ACHN (cell line): ENCODE measurements at regions of chr12 and their contacts with region 1.

Region 1: DNA sequence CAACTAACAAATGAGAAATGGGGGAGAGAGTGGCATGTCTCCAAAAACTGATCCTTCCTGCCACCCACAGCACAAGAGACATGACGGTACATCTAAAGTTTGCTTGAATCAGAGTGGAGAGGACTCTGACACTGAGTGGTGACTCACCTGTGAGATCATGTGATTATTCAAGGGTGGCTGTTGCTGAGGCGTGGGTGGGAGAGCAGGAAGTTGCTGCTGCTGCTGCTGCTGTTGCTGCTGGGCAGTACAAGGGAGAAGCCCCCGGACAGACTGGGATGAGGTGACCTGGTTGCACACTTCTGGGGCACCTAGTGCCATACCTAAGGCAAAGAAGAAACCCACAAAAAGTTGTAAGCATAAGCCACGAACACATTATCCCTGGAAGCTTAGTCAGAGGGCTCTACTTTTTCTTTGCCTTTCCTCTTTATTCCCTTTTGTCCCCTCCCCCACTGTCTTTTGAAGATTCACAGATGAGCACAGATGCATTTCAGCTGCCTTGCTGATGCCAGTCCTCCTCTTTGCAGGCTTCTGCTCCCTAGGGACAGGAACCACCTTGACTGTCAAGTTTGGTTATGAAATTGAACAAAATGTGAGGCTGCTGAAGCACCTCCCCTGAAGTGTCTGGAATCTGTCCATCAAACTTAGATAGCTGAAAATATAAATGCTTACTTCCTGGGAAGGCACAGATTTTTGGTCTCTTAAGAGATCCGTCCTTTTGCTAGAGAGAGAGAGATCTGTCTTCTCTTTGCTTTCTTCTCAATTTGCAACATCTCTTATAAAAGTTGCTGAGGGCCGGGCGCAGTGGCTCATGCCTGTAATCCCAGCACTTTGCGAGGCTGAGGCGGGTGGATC is 29.4 kb upstream of the STAC3 start:
- DNase-seq: peak; percentile 97

Region 2: DNA sequence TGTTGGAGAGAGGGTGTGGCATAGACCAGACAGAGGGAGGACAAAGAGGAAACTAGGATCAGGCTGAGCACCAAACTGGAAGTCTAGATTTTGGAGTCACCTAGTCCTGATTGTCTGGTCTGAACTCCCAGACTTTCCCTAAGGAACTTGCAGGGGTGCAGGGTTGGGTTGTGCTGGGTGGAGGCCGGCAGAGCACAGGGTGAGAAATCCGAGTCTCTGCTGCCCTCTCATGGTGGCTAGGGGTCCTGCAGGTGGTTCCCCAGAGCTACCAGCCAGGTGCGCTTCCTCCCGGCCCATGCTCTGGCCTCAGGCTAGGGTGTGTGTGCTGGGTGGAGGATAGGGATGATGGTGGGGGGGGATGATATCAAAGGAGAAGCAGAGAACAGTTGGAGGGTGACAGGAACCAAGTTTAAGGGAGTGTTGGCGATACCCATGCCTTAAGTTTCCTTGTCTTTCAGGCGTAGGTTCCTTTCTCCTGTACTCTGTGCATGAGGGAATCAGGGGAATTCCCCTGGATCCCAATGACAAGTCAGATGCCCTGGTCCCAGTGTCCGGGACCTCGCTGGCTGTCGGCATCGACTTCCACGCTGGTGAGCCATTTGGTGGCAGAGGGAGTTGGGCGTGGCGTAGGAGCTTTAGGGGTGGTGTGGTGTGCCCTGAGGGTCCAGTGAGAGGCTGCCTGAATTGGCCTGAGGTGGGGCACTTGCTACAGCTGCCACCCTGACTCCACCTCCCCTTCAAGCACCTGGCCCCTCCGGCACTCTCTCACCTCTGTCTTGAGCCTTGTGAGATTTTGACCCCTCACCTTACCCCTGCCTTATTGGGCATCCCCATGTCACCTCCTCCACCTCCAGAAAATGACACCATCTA is 97.3 kb before region 1 on chr12:
- in situ Hi-C with region 1: no loop called
- DNase-seq: peak; percentile 78

Region 3: DNA sequence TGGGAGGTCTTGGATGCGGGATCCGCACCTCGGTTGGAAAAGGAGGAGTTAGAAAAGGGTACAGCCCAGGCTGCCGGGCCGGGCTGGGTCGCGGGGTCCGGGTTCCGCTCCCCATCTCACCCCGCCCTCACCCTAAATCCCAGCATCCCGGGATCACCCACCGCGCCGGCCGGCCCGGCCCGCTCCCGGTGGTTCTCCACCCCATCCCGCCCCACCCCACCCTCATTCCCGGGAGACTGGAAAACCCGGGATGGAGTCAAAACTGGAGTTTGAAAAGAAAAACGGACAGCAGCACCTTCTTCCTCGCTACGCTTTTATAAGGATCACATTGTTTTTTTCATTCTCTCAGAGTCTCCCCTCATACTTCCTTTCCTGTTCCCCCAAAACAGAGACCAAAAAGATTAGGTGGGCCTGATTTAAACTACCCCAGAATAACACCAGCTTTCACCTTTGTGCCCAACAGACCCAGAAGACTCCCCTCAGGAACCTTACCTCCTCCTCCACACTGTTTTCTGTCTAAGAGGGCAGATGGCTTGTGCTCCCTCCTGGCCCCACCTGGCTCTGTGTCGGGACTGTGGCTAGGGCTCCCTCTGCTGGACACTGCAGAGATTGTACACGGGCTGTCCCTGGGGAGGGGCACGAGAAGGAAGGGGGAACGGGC is 181.9 kb after region 1 on chr12:
- in situ Hi-C with region 1: loop called (anchors 25 kb)
- DNase-seq: peak; percentile 96